ENCODE measurements at regions of chr11 and their contacts with region 1.

Region 1: DNA sequence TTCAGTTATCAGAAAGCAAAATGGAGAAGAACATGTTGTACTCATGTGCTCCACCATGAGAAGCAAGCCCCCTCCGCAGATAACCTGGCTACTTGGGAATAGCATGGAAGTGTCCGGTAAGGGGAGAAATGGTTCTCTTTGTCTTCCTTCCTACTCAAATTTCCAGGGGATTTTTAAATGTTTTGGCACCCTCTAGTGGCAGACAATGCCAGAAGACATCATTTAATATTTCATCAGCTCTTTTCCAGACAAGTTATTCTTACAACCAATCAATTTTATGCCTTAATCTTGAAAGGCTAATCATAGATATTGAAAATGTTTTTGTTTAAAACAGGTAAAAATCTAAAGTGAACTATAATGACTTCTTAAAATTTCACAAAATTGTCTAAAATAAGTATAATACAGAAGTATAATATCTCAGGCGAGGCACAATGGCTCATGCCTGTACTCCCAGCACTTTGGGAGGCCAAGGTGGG is 15.7 kb downstream of the CRTAM start:
- DNase-seq: peak; percentile 63
- ATAC-seq: no peak
- H3K4me3 Mint-ChIP-seq: no peak overlapping the region
- H3K27ac Mint-ChIP-seq: peak overlapping the region; percentile 17
- H3K4me1 Mint-ChIP-seq: peaks cover 58% of the 10 kb centered on the region
- H3K27me3 Mint-ChIP-seq: peaks cover 5% of the 10 kb centered on the region

Region 2: DNA sequence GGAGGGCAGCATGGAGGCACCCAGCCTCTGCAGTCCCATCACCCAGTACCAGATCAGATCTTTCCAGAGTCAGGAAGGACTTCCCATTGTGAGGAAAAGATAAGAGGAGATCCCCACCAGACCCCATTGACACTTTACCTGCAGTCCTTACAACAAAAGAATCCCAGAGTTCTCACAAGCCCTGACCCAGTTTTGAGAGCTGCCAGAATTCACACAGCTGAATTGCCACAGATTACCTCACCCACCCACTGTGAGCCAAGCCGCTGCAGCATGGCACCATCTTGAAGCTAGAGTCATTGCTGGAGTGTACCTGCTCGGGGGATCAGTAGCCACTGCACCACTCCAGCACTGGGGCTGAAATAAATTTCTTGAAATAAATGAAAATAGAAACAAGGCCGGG is 290.2 kb before region 1 on chr11:
- CTCF ChIA-PET with region 1: no interaction called
- DNase-seq: no peak
- ATAC-seq: no peak
- H3K4me3 Mint-ChIP-seq: no peak overlapping the region
- H3K27ac Mint-ChIP-seq: no peak overlapping the region
- H3K4me1 Mint-ChIP-seq: no peaks in the 10 kb centered on the region
- H3K27me3 Mint-ChIP-seq: peaks cover 16% of the 10 kb centered on the region

Region 3: GRCh38 chr11:122578168-122578825 is 275.7 kb before region 1 on chr11:
- CTCF ChIA-PET with region 1: interaction called, 37 read pairs
- DNase-seq: no peak
- ATAC-seq: no peak
- H3K4me3 Mint-ChIP-seq: no peak overlapping the region
- H3K27ac Mint-ChIP-seq: no peak overlapping the region
- H3K4me1 Mint-ChIP-seq: peaks cover 11% of the 10 kb centered on the region
- H3K27me3 Mint-ChIP-seq: peaks cover 7% of the 10 kb centered on the region

Region 4: GRCh38 chr11:122781378-122782195 is 72.4 kb before region 1 on chr11:
- CTCF ChIA-PET with region 1: interaction called, 37 read pairs
- DNase-seq: peak; percentile 82
- ATAC-seq: peak; percentile 87
- H3K4me3 Mint-ChIP-seq: no peak overlapping the region
- H3K27ac Mint-ChIP-seq: no peak overlapping the region
- H3K4me1 Mint-ChIP-seq: peaks cover 20% of the 10 kb centered on the region
- H3K27me3 Mint-ChIP-seq: no peaks in the 10 kb centered on the region

Region 5: DNA sequence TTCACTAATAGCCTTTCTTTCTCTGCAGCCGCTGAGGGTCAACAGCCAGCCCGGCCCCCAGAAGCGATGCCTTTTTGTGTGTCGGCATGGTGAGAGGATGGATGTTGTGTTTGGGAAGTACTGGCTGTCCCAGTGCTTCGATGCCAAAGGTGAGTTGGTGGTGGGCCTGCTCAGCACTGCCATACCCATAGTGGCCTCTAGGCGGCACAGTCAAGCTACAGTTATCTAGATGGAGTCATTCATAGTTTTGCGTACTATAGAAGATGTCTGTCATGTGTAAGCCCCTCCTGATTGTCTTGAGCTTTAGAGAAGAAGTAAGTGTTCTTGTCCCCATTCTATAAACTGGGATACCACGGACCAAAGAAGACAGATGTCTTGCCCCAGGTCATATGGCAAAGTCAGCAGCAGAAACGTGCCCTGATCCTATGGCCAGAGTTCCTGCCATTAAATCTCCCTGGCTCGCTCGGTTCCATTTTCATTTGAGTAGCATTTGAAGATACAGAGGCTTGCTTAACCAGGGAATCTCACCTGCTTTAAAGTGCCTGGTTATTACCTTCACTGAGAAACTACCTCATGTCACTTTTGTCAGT is 57.8 kb before region 1 on chr11:
- CTCF ChIA-PET with region 1: interaction called, 171 read pairs
- DNase-seq: peak; percentile 77
- ATAC-seq: peak; percentile 86
- H3K4me3 Mint-ChIP-seq: no peak overlapping the region
- H3K27ac Mint-ChIP-seq: no peak overlapping the region
- H3K4me1 Mint-ChIP-seq: no peaks in the 10 kb centered on the region
- H3K27me3 Mint-ChIP-seq: no peaks in the 10 kb centered on the region

Region 6: DNA sequence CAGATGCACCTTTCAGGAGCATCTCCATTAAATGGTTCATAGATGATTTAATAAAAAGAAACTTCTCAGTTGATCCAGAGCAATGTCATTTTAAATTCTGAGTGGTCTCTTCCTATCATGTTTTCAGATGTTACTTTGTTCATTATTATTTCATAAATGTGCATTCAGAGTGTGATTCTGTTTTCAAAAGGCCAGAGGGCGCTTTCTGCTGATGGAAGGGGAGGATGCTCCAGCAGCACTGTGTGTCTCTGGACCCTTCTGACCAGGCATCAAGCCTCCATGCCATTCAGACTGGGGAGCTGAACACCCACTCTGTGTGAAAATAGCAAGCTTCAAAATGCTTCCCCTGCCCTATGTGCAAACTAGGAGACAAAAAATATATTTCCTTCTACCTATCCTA is 39.6 kb before region 1 on chr11:
- CTCF ChIA-PET with region 1: interaction called, 135 read pairs
- DNase-seq: no peak
- ATAC-seq: peak; percentile 45
- H3K4me3 Mint-ChIP-seq: no peak overlapping the region
- H3K27ac Mint-ChIP-seq: no peak overlapping the region
- H3K4me1 Mint-ChIP-seq: peaks cover 11% of the 10 kb centered on the region
- H3K27me3 Mint-ChIP-seq: no peaks in the 10 kb centered on the region

Region 7: GRCh38 chr11:122843281-122844141 is 10.5 kb before region 1 on chr11:
- CTCF ChIA-PET with region 1: interaction called, 120 read pairs
- DNase-seq: peak; percentile 88
- ATAC-seq: peak; percentile 77
- H3K4me3 Mint-ChIP-seq: peak overlapping the region; percentile 62
- H3K27ac Mint-ChIP-seq: peak overlapping the region; percentile 97
- H3K4me1 Mint-ChIP-seq: peaks cover 79% of the 10 kb centered on the region
- H3K27me3 Mint-ChIP-seq: no peaks in the 10 kb centered on the region

Region 8: DNA sequence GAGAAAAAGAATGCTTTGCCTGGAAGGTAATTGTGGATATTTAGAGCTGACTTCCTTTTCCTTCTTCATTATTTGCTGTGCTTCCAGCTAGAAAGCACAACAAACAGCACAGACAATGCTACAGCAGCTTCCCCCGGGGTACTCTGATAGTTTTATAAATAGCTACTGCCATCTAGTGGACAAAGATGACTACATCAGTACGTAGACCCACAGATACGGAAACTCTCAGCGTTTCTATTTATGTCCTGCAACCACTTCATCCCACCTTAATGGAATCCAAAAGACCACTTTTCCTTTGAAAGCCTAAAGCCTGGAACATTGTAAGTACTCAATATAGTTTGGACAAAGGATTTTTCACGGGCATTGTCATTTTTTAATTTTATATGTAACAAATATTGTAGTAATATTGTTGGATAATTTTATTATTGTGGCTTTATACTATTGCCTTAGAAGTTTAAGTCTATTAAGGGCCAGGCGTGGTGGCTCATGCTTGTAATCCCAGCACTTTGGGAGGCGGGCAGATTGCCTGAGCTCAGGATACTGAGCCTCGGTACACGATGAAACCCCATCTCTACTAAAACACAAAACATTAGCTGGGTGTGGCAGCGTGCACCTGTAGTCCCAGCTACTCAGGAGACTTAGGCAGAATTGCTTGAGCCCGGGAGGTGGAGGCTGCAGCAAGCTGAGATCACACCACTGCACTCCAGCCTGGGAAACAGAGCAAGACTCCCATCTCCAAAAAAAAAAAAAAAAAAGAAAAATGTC is 200.5 kb after region 1 on chr11:
- CTCF ChIA-PET with region 1: interaction called, 12 read pairs
- DNase-seq: no peak
- ATAC-seq: peak; percentile 48
- H3K4me3 Mint-ChIP-seq: no peak overlapping the region
- H3K27ac Mint-ChIP-seq: peak overlapping the region; percentile 100
- H3K4me1 Mint-ChIP-seq: peaks cover 49% of the 10 kb centered on the region
- H3K27me3 Mint-ChIP-seq: no peaks in the 10 kb centered on the region

Measured in activated CD8-positive, alpha-beta memory T cell treated with anti-CD3 and anti-CD28 coated beads, Interleukin-2, amount 10 ng/mL, durations not matched to agents 7 days and 5 days (primary cell).